Uterus (tissue), 4 donors: ENCODE measurements at regions of chr3 and their contacts with region 1.

Region 1: GRCh38 chr3:168047190-168047795 is 48.4 kb downstream of the GOLIM4 start:
- DNase-seq: no peak
- H3K4me3 ChIP-seq: no peak overlapping the region
- H3K27ac ChIP-seq: peak overlapping the region in 1 of 2 donors; percentile 5
- H3K4me1 ChIP-seq: no peaks in the 10 kb centered on the region
- H3K27me3 ChIP-seq: no peaks in the 10 kb centered on the region
- CTCF ChIP-seq: peak; percentile 78 to 88 (median 84)
- POLR2A ChIP-seq: no peak

Region 2: DNA sequence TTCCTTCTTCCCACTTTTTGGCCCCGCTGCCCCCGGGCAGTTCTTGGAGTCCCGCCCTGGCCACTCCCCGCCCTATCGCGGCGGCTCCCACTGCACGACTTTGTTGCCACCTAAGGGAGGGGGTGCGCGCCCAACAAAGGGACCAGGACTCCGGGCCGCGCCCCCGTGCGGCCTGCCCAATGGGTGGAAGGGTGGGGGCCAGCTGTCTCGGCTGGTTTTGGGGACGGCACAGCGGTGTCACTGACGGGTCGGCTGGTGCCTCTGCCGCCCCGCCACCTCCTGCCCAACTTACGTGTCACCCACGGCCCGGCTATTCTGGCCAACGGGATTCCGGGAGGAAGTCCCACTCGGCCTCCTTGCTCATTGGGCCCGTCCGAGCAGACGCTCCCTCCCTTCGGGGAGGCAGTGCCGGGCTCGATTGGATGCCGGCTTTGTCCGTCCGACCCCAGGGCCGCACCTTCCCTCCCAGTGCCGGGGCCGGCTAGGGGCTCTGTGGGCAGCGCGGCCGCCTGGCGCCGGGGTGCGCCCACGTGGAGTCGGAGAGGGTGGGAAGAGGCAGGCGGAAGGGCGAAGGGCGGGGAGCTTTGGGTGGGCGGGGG is 48.4 kb after region 1 on chr3 and contains the start of gene GOLIM4:
- intact Hi-C with region 1: no loop called
- DNase-seq: peak; percentile 92 to 93
- H3K4me3 ChIP-seq: peak within 1 kb of the TSS; percentile 83 to 87
- H3K27ac ChIP-seq: peak within 1 kb of the TSS; percentile 93 to 95
- H3K4me1 ChIP-seq: peaks cover 7 to 10% of the 10 kb centered on the region in 2 donors
- H3K27me3 ChIP-seq: no peaks in the 10 kb centered on the region
- CTCF ChIP-seq: peak in 2 of 4 experiments; percentile 0 to 21
- POLR2A ChIP-seq: peak; percentile 40 to 86
- total RNA-seq, gene GOLIM4: 21.0 to 85.1 (median 29.7) TPM

Region 3: DNA sequence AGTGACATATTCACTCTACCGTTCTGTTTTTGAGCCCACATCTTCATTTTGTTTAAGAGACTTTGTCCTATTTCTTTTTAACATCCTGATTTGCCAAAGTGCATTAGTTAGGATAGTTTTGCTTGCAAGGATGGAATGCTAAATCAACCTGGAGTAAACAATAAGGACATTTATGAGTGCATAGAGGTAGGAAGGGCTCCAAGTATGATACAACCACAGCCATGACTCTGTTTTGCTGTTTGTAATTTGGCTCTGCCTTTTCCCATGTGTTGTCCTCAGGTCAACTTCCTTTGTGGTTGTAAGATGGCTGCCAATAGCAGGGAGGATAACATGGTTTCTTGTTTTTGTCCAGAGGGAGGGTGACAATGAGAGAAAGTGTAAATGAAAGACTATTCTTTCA is 114.9 kb after region 1 on chr3:
- intact Hi-C with region 1: loop called (anchors 5 kb)
- DNase-seq: no peak
- H3K4me3 ChIP-seq: no peak overlapping the region
- H3K27ac ChIP-seq: peak overlapping the region; percentile 44 to 52
- H3K4me1 ChIP-seq: no peaks in the 10 kb centered on the region
- H3K27me3 ChIP-seq: no peaks in the 10 kb centered on the region
- CTCF ChIP-seq: no peak
- POLR2A ChIP-seq: no peak

Region 4: GRCh38 chr3:168233001-168233400 is 185.7 kb after region 1 on chr3:
- intact Hi-C with region 1: no loop called
- DNase-seq: no peak
- H3K4me3 ChIP-seq: no peak overlapping the region
- H3K27ac ChIP-seq: no peak overlapping the region
- H3K4me1 ChIP-seq: no peaks in the 10 kb centered on the region
- H3K27me3 ChIP-seq: no peaks in the 10 kb centered on the region
- CTCF ChIP-seq: no peak
- POLR2A ChIP-seq: no peak